Calu3 (cell line): ENCODE measurements at regions of chr9 and their contacts with region 1.

Region 1: GRCh38 chr9:114108016-114108833 is 9.1 kb upstream of the KIF12 start:
- DNase-seq: peak; percentile 86
- H3K4me3 Mint-ChIP-seq: no peak overlapping the region
- H3K27ac Mint-ChIP-seq: no peak overlapping the region
- H3K4me1 Mint-ChIP-seq: peaks cover 38% of the 10 kb centered on the region
- H3K27me3 Mint-ChIP-seq: peaks cover 19% of the 10 kb centered on the region
- CTCF ChIP-seq: peak; percentile 82

Region 2: DNA sequence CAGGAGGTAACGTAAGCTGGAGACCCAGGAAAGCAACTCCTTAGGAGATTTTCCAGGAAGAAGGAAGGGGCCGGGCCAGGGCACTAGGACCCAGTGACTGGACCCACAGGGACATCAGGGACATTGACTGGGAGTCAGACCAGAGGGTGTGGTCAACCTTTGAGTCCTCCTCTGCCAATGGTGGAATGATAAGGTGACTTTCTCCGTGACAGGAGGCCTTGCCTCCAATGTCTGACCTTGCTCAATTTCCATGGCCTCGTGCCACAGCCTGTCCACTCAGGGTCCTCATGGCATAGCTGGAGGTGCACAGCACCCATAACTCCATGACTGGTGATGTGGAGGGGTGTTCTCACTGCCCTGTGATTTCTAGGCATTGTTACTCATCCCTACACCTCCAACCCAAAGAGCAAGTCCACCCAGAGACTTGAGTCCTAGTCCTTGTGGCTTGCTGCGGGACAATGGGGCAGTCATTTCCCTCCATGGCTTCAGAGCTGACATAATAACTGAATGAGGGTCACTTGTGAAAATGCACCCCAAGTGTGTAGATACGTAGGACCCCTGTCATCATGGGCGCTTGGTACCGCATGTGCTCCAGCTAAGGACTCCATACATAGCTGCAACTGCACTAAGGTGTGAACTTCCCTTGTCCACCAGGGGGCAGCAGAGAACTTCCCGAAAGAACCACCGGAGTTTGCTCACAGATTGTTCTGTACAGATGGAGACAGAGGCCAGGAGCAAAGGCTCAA is 26.0 kb before region 1 on chr9:
- CTCF ChIA-PET with region 1: interaction called, 24 read pairs
- intact Hi-C with region 1: no loop called
- DNase-seq: peak; percentile 88
- H3K4me3 Mint-ChIP-seq: peak overlapping the region; percentile 35
- H3K27ac Mint-ChIP-seq: peak overlapping the region; percentile 86
- H3K4me1 Mint-ChIP-seq: peaks cover 41% of the 10 kb centered on the region
- H3K27me3 Mint-ChIP-seq: no peaks in the 10 kb centered on the region
- CTCF ChIP-seq: peak; percentile 79

Region 3: DNA sequence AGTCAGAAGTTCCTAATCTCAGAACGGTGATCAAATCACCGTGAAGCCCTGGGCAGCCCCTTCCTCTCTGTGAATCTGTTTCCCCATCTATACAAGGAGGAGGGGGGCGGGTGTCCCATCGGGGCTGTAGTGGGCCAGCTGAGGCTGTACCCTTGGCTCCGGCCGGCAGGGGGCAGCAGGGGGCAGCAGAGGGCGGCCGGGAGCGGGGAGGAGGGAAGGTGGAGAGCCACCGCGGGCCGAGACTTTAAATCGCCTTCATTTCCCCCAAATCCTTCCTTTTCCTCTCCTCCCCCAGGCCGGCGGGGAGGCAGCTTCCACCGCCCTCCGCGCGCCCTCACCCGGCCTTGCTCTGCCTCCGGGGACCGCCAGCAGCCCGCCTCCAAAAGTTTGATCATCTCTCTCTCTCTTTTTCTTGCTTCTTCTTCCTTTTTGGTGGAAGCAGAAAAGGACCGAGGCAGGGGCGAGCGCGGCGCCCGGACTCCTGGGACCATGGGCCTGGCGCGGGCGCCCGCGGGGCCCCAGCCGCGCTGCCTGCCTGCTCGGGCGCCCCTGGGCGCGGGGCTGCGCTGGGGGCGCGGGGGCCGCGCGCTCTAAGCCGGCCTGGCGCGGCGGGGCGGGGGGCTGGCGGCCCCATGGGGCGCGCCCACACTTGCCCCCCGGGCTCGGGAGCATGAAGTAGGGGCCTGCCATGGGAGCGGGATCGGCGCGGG is 47.2 kb after region 1 on chr9 and contains the start of gene COL27A1:
- CTCF ChIA-PET with region 1: interaction called, 27 read pairs
- intact Hi-C with region 1: loop called (anchors 1 kb)
- DNase-seq: peak; percentile 89
- H3K4me3 Mint-ChIP-seq: peak within 1 kb of the TSS; percentile 58
- H3K27ac Mint-ChIP-seq: peak within 1 kb of the TSS; percentile 52
- H3K4me1 Mint-ChIP-seq: peaks cover 31% of the 10 kb centered on the region
- H3K27me3 Mint-ChIP-seq: peaks cover 16% of the 10 kb centered on the region
- CTCF ChIP-seq: peak; percentile 76
- total RNA-seq, gene COL27A1: 20.1 and 21.4 TPM in 2 replicates

Region 4: DNA sequence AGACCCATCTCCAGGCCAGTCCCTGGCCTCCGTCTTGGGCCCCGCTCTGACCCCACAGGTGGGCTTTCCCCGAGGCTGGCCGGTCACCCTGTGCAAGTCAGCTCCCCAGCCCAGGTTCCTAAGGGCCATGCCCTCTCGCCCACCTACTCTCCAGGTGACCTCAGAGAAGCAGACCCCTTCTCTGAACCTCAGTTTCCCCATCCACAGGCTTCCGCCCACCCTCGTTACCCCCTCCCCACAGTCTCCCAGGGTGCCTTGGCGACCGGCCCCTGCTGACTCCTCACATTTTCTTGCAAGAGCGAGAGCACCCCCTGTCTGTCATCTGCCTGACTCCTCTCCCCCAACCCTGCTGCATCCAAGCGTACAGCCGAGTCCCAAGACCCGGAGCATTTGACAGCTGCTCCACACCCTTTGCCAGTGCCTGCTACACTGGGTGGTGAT is 163.4 kb after region 1 on chr9:
- CTCF ChIA-PET with region 1: interaction called, 11 read pairs
- intact Hi-C with region 1: loop called (anchors 5 kb)
- DNase-seq: peak; percentile 57
- H3K4me3 Mint-ChIP-seq: no peak overlapping the region
- H3K27ac Mint-ChIP-seq: no peak overlapping the region
- H3K4me1 Mint-ChIP-seq: no peaks in the 10 kb centered on the region
- H3K27me3 Mint-ChIP-seq: no peaks in the 10 kb centered on the region
- CTCF ChIP-seq: no peak

Region 5: DNA sequence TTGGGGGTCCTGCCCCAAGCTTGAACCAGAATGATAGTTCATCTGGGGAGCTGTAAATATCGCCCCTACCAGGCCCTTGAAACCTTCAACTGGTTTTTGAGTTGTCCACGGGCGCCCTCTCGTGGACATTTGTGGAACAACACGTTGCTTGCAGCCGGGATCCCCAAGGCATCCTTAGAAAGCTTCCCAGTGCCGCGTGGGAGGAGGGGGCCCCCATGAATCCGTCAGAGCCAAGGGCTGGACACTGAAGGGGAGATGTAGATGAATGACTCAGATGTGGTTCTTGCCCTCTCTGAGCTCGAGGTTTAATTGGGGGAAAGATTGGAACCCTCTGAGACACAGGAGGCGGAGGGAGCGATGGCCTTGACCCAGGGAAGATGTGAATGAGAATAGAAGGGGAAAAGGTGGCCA is 182.8 kb after region 1 on chr9:
- CTCF ChIA-PET with region 1: interaction called, 25 read pairs
- intact Hi-C with region 1: loop called (anchors 2 kb)
- DNase-seq: peak; percentile 66
- H3K4me3 Mint-ChIP-seq: no peak overlapping the region
- H3K27ac Mint-ChIP-seq: no peak overlapping the region
- H3K4me1 Mint-ChIP-seq: peaks cover 8% of the 10 kb centered on the region
- H3K27me3 Mint-ChIP-seq: no peaks in the 10 kb centered on the region
- CTCF ChIP-seq: peak; percentile 73